Right cardiac atrium (tissue), 5 donors: ENCODE measurements at regions of chr10 and their contacts with region 1.

Region 1: GRCh38 chr10:114714281-114714741 is 56.2 kb upstream of the ABLIM1 start:
- DNase-seq: peak in 1 of 3 donors; percentile 45
- ATAC-seq: peak; percentile 66 to 79
- H3K4me3 ChIP-seq: no peak overlapping the region
- H3K27ac ChIP-seq: peak overlapping the region; percentile 60
- H3K4me1 ChIP-seq: peaks cover 11% of the 10 kb centered on the region
- H3K27me3 ChIP-seq: no peaks in the 10 kb centered on the region

Region 2: DNA sequence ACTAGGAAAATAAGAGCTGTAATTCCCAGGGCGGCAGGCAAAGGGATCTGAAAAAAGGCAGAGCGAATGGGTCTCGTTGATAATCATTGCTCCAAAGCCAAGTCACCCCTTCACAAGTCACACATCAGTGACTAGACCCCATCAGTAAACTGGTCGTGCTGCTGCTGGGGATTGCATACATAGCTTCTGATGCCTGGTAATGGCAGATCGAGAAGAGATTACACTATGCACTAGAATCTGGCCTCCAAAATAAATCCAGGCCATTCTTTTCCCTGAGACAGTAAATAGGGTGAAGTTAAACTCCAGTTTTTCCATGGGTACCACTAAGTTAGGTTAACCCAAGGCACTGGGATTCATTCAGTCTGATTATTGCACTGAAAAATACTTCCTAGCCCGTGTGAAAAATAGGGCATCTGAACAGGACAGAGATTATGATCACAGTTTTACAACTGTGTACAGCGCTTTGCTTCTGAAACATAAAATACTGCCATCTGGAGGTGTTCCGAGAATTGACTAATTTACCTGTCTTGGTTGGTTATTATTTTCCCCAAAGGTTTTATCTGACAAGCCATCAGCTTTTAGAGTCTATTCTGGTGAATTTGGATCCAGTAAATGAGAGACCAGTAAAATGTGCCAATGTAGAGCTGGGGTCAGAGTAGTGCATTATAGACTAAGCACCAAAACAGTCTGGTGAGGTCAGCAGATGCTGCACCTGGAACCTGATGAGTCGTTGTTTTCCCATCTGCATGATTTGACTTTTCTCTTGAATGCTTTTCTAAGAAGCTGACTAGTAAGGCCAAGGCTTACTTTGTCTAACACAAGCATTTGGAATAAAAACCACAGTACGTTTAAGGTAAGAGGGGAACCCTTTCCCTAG is 227.1 kb before region 1 on chr10:
- intact Hi-C with region 1: loop called in 1 of 4 experiments (anchors 10 kb)
- DNase-seq: no peak
- ATAC-seq: no peak
- H3K4me3 ChIP-seq: no peak overlapping the region
- H3K27ac ChIP-seq: peak overlapping the region; percentile 48
- H3K4me1 ChIP-seq: peaks cover 19% of the 10 kb centered on the region
- H3K27me3 ChIP-seq: no peaks in the 10 kb centered on the region

Region 3: DNA sequence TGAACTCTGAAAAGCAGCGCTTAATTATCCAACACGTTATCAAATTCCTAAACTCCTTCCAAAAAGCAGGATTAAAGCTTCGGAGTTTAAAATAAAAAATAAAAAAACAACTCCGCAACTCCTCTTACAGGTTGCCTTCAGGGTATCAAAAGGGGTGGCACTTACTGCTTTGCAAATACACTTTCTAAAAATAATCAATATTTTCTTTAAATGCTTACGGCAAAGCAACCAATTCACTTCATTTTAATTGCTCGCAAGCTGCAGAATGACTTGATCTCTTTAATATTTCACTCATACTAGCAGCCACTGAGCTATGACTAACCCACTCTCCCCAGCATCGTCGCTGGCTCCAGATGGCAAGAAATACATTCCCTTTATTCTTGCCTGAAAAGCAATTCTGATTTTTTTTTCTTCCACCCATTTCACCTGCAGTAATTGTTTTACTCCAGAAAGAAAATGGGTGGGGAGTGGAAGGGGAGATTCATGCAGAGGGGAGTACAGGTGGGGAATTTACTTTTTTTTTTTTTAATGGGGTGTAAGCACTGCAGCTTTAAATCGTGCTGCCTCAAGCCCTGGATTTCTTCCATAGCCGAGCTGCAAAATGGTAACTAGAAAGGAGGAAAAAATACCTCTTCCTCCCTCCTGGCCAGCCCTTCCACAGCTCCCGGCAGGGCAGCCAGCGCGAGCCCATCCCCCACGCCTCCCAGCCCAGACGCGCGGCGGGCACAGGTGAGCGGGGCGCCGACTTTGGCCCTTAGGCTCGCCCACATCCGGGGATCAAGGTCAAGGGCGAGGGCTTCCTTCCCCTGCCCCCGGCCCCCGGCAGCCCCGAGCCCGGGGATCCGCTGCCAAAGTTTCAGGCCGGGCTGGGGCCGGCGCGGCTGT is 53.0 kb after region 1 on chr10:
- intact Hi-C with region 1: loop called in 2 of 4 experiments (anchors 10 kb)
- DNase-seq: peak; percentile 30 to 80 (median 69)
- ATAC-seq: peak; percentile 69 to 74
- H3K4me3 ChIP-seq: peak overlapping the region; percentile 87
- H3K27ac ChIP-seq: peak overlapping the region; percentile 72
- H3K4me1 ChIP-seq: no peaks in the 10 kb centered on the region
- H3K27me3 ChIP-seq: no peaks in the 10 kb centered on the region